Left colon (tissue), 2 donors: ENCODE measurements at regions of chr6 and their contacts with region 1.

Region 1: DNA sequence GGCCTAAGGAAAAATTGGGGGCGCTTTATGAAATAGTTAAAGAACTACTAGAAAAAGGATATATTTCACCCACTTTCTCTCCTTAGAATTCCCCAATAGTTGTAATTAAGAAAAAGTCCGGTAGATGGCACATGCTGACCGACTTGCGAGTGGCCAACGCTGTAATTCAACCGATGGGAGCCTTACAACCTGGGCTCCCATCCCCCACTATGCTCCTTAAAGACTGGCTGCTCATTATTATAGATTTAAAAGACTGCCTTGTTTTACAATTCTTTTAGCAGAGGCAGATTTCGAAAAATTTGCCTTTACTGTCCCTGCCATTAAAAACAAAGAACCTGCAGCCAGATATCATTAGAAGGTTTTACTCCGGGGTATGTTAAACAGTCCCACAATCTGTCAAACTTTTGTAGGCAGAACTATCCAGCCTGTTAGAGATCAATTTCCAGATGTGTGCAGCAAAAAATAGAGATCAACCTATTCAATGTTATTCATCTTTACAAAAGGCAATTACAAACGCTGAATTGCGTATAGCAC is 58.5 kb upstream of the PRSS16 start:
- DNase-seq: peak; percentile 66 to 74
- ATAC-seq: peak; percentile 84

Region 2: DNA sequence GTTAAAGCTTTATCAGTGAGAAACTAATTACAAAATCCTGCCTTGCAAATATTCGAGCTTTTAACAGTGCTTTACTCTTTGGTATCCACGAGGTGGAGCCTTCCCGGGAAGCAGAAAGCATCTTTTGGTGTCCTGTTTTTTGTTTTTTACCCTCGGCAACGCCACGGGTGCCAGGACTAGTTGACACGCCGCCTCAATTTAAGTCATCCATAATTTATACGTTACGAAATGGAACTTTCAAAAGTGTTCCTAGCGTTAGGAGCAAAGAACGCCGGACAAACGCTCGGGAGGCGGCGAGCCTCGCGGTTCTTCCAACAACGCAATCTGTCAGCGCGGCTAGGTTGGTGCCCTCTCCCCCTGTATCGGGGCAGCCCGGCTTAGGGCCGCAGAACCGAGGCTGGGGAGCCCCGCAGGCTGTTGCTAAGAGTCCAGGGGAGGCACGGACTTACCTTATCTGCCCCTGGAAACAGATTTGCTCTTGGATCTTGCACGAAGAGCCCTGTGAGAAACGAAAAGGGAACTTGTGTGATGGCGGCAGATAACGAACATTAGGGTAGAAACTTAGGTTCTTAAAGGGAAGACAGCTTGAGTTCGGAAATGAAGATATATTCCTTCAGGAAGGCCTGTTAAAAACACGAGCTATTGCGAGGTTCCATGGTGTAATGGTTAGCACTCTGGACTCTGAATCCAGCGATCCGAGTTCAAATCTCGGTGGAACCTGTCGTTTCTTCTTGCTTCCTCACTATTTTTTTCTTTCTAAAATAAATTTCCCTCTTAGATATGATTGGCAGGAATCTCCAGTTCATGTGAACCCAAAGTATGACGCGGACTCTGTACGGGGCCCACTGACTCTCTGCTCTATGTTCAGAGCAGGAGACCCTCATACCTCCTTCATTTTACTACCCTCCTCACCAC is 330.2 kb after region 1 on chr6:
- intact Hi-C with region 1: loop called in 1 of 2 experiments (anchors 5 kb)
- DNase-seq: peak; percentile 34 to 61
- ATAC-seq: peak; percentile 87